Naive thymus-derived CD8-positive, alpha-beta T cell (primary cell): ENCODE measurements at regions of chr11 and their contacts with region 1.

Region 1: GRCh38 chr11:124953753-124954589 is at the start of gene CCDC15:
- DNase-seq: peak; percentile 86 to 96 (median 93)
- ATAC-seq: peak; percentile 94 to 96
- H3K4me3 Mint-ChIP-seq: no peak within 1 kb of the TSS
- H3K27ac Mint-ChIP-seq: no peak within 1 kb of the TSS
- H3K4me1 Mint-ChIP-seq: peaks cover 0 to 7% (median 3%) of the 10 kb centered on the region in 4 donors
- H3K27me3 Mint-ChIP-seq: no peaks in the 10 kb centered on the region
- polyA plus RNA-seq, gene CCDC15: 1.5 to 2.2 (median 2.1) TPM

Region 2: GRCh38 chr11:124800226-124800929 is 153.6 kb before region 1 on chr11 and contains the start of gene MSANTD2:
- POLR2A ChIA-PET with region 1: interaction called, 11 read pairs
- DNase-seq: peak; percentile 57 to 83 (median 76)
- ATAC-seq: peak; percentile 83 to 88
- H3K4me3 Mint-ChIP-seq: peak within 1 kb of the TSS; percentile 87 to 98 (median 95)
- H3K27ac Mint-ChIP-seq: peak within 1 kb of the TSS; percentile 91 to 99 (median 96)
- H3K4me1 Mint-ChIP-seq: peaks cover 15 to 34% (median 23%) of the 10 kb centered on the region in 4 donors
- H3K27me3 Mint-ChIP-seq: peaks cover 0 to 2% (median 0%) of the 10 kb centered on the region in 5 donors
- polyA plus RNA-seq, gene MSANTD2: 3.5 to 4.2 (median 4.0) TPM

Region 3: DNA sequence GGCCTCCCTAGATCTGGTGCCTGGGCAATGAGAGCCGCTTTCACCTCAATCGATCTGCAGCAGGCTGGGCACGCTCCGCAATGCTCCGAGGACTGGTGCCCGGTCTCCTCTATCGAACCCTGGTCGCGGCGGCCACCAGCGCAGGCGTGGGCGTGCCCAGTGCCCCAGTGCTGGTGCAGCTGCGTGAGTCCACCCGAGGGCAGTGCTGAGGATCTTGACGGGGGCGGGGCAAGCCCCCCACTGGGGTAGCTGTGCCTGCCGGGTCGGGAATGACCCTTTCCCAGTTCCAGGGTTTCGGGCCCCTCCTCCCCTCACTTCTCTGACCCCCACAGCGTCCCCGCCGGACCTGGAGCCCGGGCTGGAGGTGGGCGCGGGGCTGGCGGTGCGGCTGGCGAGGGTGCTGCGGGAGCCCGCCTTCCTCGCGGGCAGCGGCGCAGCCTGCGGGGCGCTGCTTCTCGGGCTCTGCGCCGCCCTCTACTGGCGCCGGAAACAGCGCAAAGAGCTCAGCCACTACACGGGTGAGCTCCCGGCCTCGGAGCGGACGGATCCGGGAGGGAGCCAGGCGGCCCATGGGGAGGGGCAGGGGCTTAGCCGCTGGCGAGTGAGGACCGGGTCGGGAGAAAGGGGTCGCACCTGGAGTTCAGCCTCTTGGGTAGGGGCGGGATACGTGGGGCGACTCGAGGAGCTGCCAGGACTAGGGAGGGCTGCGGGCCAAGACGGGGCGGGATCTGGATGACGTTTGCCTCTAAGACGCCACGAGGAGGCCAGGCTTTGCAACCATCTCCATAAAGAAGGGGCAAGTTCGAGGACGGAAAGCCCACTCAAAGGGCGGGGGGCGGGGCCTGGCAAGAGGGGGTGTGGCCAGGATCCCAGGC is 77.8 kb before region 1 on chr11:
- POLR2A ChIA-PET with region 1: interaction called, 49 read pairs
- DNase-seq: peak; percentile 62 to 90 (median 78)
- ATAC-seq: peak; percentile 94
- H3K4me3 Mint-ChIP-seq: peak overlapping the region; percentile 74 to 96 (median 91)
- H3K27ac Mint-ChIP-seq: peak overlapping the region; percentile 53 to 98 (median 96)
- H3K4me1 Mint-ChIP-seq: peaks cover 18 to 44% (median 23%) of the 10 kb centered on the region in 4 donors
- H3K27me3 Mint-ChIP-seq: peaks cover 5 to 43% (median 22%) of the 10 kb centered on the region in 5 donors

Region 4: GRCh38 chr11:124920870-124921609 is 32.9 kb before region 1 on chr11:
- POLR2A ChIA-PET with region 1: interaction called, 50 read pairs
- DNase-seq: peak; percentile 73 to 96 (median 83)
- ATAC-seq: peak; percentile 86 to 92
- H3K4me3 Mint-ChIP-seq: peak overlapping the region; percentile 64 to 88 (median 83)
- H3K27ac Mint-ChIP-seq: peak overlapping the region in 9 of 10 donors; percentile 75 to 92 (median 83)
- H3K4me1 Mint-ChIP-seq: peaks cover 21 to 37% (median 32%) of the 10 kb centered on the region in 4 donors
- H3K27me3 Mint-ChIP-seq: peaks cover 0 to 9% (median 0%) of the 10 kb centered on the region in 5 donors

Region 5: DNA sequence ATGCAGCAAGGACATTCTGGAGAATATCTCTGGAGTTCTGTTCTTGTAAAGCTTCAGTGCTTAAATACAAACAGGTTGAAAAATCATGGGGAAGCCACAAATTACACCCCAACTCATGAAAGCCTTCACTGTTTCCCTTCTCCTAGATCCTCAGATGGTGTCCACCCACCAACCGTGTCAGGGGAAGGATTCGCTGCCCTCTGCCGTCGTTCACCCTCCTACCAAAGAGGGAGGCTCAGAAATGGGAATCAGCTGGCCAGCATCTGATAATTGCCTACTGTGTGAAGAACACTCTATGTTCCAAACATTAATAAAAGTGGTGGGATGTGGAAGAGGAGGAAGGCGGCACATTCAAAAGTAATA is 10.7 kb before region 1 on chr11:
- POLR2A ChIA-PET with region 1: interaction called, 26 read pairs
- DNase-seq: no peak
- ATAC-seq: no peak
- H3K4me3 Mint-ChIP-seq: peak overlapping the region in 3 of 10 donors; percentile 28 to 30 (median 29)
- H3K27ac Mint-ChIP-seq: peak overlapping the region; percentile 41 to 93 (median 74)
- H3K4me1 Mint-ChIP-seq: peaks cover 11 to 33% (median 25%) of the 10 kb centered on the region in 4 donors
- H3K27me3 Mint-ChIP-seq: no peaks in the 10 kb centered on the region

Region 6: DNA sequence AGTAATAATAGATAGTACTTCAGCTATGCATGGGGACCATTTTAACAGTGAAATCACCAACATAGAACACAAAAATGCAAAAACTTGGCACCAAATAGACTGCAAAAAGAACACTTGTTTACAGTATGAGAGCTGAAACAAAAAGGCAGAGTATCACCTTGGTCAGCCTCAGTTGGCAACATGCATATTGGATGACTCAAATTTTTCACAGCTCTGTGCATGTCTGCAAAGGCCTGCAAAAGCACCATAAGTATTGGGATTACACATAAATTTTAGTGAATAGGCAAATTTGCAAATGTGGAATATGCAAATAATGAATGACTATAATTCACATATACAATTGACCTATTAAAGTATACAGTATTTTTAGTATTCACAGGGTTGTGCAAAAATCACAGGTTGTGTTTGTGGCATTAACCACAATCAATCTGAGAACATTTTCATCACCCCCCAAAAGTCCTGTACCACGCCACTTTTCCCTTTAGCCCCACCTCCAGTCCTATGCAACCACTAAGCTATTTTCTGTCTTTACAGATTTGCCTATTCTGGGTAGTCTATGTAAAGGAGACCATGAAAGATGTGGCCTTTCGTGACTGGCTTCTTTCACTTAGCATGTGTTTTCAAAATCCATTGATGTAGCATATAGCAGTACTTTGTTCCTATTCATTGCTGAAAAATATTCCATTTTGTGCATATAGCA is 47.3 kb after region 1 on chr11:
- POLR2A ChIA-PET with region 1: no interaction called
- DNase-seq: no peak
- ATAC-seq: no peak
- H3K4me3 Mint-ChIP-seq: no peak overlapping the region
- H3K27ac Mint-ChIP-seq: no peak overlapping the region
- H3K4me1 Mint-ChIP-seq: no peaks in the 10 kb centered on the region
- H3K27me3 Mint-ChIP-seq: no peaks in the 10 kb centered on the region

Region 7: DNA sequence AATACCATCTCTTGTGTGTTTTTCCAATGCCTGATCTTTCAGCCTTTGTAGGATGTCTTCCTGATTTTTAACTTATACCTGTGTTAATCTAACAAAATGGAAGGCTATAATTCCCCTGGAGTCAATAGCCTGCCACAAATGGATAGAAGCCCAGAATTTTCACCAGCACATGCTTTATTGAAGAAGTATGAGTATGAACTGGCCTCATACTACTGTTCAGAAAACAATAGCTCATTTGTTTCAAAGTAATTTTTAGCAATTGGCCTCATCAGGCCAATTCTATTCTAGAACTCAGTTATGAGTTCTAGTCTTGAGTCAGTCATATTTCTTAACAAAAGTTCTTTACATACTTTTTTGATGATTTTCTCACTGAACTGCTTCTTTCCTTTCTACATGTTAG is 68.6 kb after region 1 on chr11:
- POLR2A ChIA-PET with region 1: no interaction called
- DNase-seq: no peak
- ATAC-seq: no peak
- H3K4me3 Mint-ChIP-seq: no peak overlapping the region
- H3K27ac Mint-ChIP-seq: no peak overlapping the region
- H3K4me1 Mint-ChIP-seq: no peaks in the 10 kb centered on the region
- H3K27me3 Mint-ChIP-seq: no peaks in the 10 kb centered on the region

Region 8: DNA sequence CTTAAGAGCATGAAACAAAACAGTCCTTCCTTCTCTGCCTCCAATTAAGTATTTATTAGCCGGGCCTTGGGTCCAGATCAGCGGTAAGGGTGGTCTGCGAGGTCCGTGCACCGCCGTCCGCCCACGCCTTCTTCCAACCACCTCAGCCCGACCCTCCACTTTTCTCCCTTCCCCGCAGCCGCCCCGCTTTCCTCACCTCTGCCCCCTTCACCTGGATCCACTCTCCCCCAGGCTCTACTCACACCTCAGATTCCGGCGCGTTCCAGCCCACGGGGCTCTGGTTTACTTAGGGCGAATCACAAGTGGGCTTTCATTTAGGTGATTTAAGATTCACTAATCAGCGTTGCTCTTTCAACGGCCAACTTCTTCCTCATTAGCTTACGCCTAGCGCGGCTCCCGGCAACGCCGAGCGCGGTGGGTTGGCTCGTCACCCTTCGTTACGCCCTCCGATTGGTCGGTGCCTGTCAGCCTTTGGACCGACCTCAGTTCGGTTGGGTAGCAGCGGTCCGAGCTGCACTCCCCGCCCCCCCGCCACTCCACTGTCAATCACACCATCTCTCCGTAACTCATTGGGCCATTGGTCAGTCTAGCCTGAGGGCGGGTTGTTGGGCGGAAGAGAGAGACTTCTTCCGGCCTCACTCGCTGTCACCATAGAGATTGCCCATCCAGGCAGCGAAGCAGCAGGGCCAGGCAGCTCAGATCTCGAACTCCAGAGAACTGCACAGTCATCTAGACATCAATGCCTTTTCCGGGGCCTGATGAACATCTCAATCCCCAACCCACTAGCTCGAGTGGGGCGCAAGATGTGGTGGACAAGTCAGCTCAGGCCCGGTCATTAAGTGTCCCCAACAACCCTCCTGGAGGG is 157.6 kb after region 1 on chr11 and contains the start of gene TMEM218:
- POLR2A ChIA-PET with region 1: interaction called, 27 read pairs
- DNase-seq: peak; percentile 83 to 99 (median 96)
- ATAC-seq: peak; percentile 94 to 96
- H3K4me3 Mint-ChIP-seq: peak within 1 kb of the TSS; percentile 91 to 100 (median 98)
- H3K27ac Mint-ChIP-seq: peak within 1 kb of the TSS; percentile 96 to 100 (median 97)
- H3K4me1 Mint-ChIP-seq: peaks cover 7 to 24% (median 22%) of the 10 kb centered on the region in 4 donors
- H3K27me3 Mint-ChIP-seq: peaks cover 0 to 4% (median 2%) of the 10 kb centered on the region in 5 donors
- polyA plus RNA-seq, gene TMEM218: 30.0 to 40.1 (median 35.3) TPM